PC-9 (cell line): ENCODE measurements at regions of chr18 and their contacts with region 1.

Region 1: GRCh38 chr18:55096261-55096951 is 137.1 kb upstream of the CCDC68 start:
- DNase-seq: peak in 1 of 2 experiments; percentile 37
- H3K4me3 ChIP-seq: no peak overlapping the region
- H3K27ac ChIP-seq: no peak overlapping the region
- H3K4me1 ChIP-seq: peaks cover 21% of the 10 kb centered on the region
- H3K27me3 ChIP-seq: no peaks in the 10 kb centered on the region
- CTCF ChIP-seq: 0 out of 2 replicates have a peak, but pooled peaks have one; percentile 21

Region 2: GRCh38 chr18:55031979-55032378 is 64.4 kb before region 1 on chr18:
- CTCF ChIA-PET with region 1: no interaction called
- POLR2A ChIA-PET with region 1: no interaction called
- intact Hi-C with region 1: loop called (anchors 5 kb)
- DNase-seq: peak; percentile 50 to 81
- H3K4me3 ChIP-seq: no peak overlapping the region
- H3K27ac ChIP-seq: peak overlapping the region; percentile 39
- H3K4me1 ChIP-seq: no peaks in the 10 kb centered on the region
- H3K27me3 ChIP-seq: no peaks in the 10 kb centered on the region
- CTCF ChIP-seq: no peak

Region 3: GRCh38 chr18:55234366-55235093 is 138.1 kb after region 1 on chr18:
- CTCF ChIA-PET with region 1: no interaction called
- POLR2A ChIA-PET with region 1: no interaction called
- intact Hi-C with region 1: loop called (anchors 5 kb)
- DNase-seq: peak; percentile 57 to 67
- H3K4me3 ChIP-seq: no peak overlapping the region
- H3K27ac ChIP-seq: no peak overlapping the region
- H3K4me1 ChIP-seq: no peaks in the 10 kb centered on the region
- H3K27me3 ChIP-seq: no peaks in the 10 kb centered on the region
- CTCF ChIP-seq: peak; percentile 84